ENCODE measurements at regions of chr13 and their contacts with region 1.

Region 1: GRCh38 chr13:23871616-23872220 is 17.5 kb downstream of the MIPEP start:
- DNase-seq: peak; percentile 38
- H3K4me3 Mint-ChIP-seq: no peak overlapping the region
- H3K27ac Mint-ChIP-seq: no peak overlapping the region
- H3K4me1 Mint-ChIP-seq: no peaks in the 10 kb centered on the region
- H3K27me3 Mint-ChIP-seq: no peaks in the 10 kb centered on the region

Region 2: GRCh38 chr13:23715762-23716235 is 155.9 kb before region 1 on chr13:
- intact Hi-C with region 1: loop called (anchors 5 kb)
- DNase-seq: peak; percentile 63
- H3K4me3 Mint-ChIP-seq: no peak overlapping the region
- H3K27ac Mint-ChIP-seq: no peak overlapping the region
- H3K4me1 Mint-ChIP-seq: peaks cover 6% of the 10 kb centered on the region
- H3K27me3 Mint-ChIP-seq: peaks cover 19% of the 10 kb centered on the region

Measured in activated CD4-positive, alpha-beta T cell treated with anti-CD3 and anti-CD28 coated beads, Interleukin-2, amount 10 ng/mL, durations not matched to agents 24 days and 14 days (primary cell).